RWPE1 (cell line): ENCODE measurements at regions of chr20 and their contacts with region 1.

Region 1: DNA sequence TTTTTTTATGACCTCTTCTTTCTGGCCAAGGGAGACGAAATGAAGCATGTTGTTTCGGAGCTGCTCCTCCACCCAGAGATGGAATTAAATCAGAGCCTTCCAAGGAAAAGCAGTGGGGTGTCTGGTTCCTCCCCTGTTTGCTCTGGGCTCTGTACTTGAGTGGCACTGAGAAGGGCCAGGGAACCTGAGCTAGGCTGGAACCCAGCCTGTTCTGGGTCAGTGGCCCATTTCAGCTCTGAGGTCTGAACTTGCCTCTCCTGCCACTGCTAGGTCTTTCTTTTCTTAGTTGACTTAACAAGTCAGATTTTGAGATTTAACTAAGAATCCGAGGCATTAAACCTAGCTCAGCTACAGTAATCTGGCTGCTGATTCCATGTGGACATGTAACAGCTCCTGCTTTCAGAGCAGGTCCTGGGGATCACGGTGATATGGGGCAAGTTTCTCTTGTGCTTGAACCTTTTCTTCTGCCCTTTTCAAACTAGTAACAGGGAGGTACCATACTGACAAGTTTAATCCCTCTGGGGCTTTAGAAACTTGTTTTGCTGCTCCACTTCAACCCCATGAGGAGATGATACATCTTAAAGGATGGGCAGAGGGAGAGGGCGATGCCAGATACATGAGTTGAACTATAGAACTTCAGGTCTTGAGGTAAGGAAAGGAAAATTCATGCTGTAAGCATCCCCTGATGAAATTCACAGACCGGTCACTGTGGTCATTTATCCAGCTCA is 101.1 kb downstream of the SLC24A3 start:
- DNase-seq: no peak
- H3K27ac ChIP-seq: no peak overlapping the region
- CTCF ChIP-seq: no peak

Region 2: GRCh38 chr20:19327401-19327800 is 13.9 kb after region 1 on chr20:
- CTCF ChIA-PET with region 1: no interaction called
- POLR2A ChIA-PET with region 1: interaction called, 10 read pairs
- DNase-seq: no peak
- H3K27ac ChIP-seq: no peak overlapping the region
- CTCF ChIP-seq: no peak

Region 3: GRCh38 chr20:19628570-19629169 is 315.2 kb after region 1 on chr20:
- CTCF ChIA-PET with region 1: no interaction called
- POLR2A ChIA-PET with region 1: no interaction called
- DNase-seq: peak; percentile 67
- H3K27ac ChIP-seq: no peak overlapping the region
- CTCF ChIP-seq: peak; percentile 71